ENCODE measurements at regions of chr17 and their contacts with region 1.

Region 1: GRCh38 chr17:8138672-8139371 is 13.4 kb downstream of the PER1 start:
- H3K4me3 ChIP-seq: peak overlapping the region; percentile 71
- H3K27ac ChIP-seq: peak overlapping the region; percentile 48
- H3K4me1 ChIP-seq: 0 out of 2 replicates have a peak, but pooled peaks cover 4% of the 10 kb centered on the region
- CTCF ChIP-seq: peak; percentile 92

Region 2: DNA sequence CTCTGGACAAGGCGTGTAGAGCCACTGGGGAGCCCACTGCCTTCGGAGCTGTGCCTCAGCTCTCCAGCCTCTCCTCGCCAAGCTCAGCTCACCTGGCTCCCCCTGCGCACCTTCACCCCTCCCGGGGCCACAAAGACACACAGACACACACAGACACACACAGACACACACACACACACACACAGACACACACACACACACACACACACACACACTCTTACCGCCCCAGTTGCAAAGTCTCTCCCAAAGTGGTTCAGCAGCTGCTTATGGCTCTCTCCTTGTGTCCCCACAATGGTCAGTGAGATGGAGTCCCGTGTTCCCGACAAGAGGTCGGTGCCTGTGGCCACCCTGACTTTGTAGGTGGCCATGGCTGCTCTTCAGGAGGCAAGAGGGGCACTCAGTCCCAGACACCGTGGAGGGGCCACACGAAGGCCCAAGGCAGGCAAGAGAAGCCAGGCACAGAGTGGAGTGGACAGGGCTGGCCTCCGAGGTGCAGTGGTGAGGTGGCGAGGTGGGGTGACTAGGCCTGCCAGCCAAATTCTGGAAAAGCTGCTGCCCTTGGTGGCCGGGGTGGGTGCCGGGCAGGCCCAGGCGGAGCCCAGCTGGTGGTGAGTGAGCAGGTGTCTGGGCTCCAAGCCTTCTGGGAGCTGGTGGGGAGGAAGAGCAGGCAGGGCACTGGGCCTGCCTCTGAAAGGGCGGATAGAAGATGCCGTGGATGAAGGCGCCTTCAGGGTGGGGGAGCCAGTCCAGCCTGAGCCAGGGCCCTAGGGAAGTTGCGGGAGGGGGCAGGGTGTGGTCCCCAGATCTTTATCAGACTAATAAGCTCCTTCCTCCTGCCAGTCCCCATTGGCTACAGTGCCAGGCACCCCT is 51.5 kb before region 1 on chr17 and contains the start of gene ALOX12B:
- CTCF ChIA-PET with region 1: no interaction called
- POLR2A ChIA-PET with region 1: no interaction called
- H3K4me3 ChIP-seq: no peak within 1 kb of the TSS
- H3K27ac ChIP-seq: no peak within 1 kb of the TSS
- H3K4me1 ChIP-seq: no peaks in the 10 kb centered on the region
- CTCF ChIP-seq: no peak

Region 3: GRCh38 chr17:8125157-8125946 is 13.5 kb before region 1 on chr17:
- CTCF ChIA-PET with region 1: interaction called, 36 read pairs
- POLR2A ChIA-PET with region 1: interaction called, 15 read pairs
- H3K4me3 ChIP-seq: peak overlapping the region; percentile 55
- H3K27ac ChIP-seq: peak overlapping the region; percentile 77; the same call in 1 of the 2 replicates
- H3K4me1 ChIP-seq: peaks cover 14% of the 10 kb centered on the region
- CTCF ChIP-seq: no peak

Region 4: GRCh38 chr17:8151123-8151640 is 12.4 kb after region 1 on chr17:
- CTCF ChIA-PET with region 1: interaction called, 91 read pairs
- POLR2A ChIA-PET with region 1: interaction called, 31 read pairs
- H3K4me3 ChIP-seq: peak overlapping the region; percentile 44
- H3K27ac ChIP-seq: no peak overlapping the region; the same call in 1 of the 2 replicates
- H3K4me1 ChIP-seq: peaks cover 25% of the 10 kb centered on the region
- CTCF ChIP-seq: no peak

Region 5: DNA sequence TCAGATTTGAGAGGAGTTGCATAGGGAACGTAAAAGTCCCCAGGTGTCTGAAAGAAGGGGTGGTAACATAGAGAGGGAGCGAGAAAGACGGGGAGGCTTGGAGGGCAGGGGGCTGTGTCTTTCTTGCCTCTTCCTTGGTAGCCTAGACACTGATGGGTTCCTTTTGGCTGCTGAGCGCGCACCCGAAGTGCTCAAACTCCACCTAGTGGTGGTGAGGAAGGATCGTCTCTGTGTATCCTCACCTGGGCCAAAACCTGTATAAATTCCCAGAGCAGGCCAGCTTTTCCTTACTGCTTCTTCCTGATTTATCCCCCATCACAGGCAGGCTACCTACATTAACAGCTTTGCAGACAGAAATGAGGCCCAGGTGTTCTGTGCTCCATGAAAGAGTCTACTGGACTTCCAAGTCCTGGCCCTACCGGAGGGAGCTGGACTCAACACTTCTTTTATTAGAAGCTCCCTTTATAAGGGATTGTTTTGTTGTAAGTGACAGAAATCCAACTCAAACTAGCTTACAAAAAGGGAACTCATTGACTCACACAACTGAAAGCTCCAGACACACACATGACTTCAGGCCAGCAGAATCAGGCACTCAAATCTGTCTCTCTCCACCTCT is 161.9 kb after region 1 on chr17:
- CTCF ChIA-PET with region 1: interaction called, 12 read pairs
- POLR2A ChIA-PET with region 1: no interaction called
- H3K4me3 ChIP-seq: no peak overlapping the region
- H3K27ac ChIP-seq: no peak overlapping the region
- H3K4me1 ChIP-seq: no peaks in the 10 kb centered on the region
- CTCF ChIP-seq: peak; percentile 81

Region 6: DNA sequence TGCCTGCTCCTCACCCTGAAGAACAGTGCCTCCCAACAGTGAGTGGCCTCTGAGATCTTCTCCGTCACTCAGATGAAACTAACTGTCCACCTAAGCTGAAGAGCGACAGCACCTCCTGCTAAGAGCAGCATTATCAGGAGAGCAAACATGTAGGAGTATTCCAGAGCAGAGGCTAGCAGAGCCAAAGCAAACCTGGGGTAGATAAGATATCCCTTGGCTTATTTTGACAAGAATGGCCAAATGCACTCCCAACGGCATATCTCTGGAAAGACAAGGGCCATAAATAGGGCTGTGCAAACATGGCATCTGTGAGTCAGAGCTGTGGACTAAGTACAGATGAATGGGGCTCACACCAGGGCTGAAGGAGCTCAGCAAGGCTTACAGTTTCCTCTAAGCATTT is 393.2 kb after region 1 on chr17:
- CTCF ChIA-PET with region 1: no interaction called
- POLR2A ChIA-PET with region 1: no interaction called
- H3K4me3 ChIP-seq: no peak overlapping the region
- H3K27ac ChIP-seq: no peak overlapping the region
- H3K4me1 ChIP-seq: no peaks in the 10 kb centered on the region
- CTCF ChIP-seq: no peak

Measured in HEK293 (cell line).